PC-3 (cell line): ENCODE measurements at regions of chr9 and their contacts with region 1.

Region 1: DNA sequence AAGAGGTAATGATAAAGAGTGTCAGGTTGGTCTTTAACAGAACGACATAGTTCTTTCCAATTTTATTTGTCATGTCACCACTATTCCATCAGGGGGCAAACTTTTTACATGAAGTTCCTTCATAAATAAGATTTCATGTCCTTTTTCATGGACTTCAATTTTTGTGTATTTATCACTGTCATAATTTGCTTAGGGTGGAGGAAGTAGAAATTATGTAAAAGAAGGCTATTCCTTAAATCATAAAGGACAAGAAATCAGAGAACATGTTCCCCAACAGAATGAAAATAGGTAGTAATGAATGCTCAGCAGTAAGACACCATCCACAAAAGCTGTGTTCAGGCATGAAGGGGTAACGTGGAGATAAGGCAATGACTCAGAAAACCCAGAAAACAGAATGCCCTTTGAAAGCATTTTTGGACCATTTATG is 72.7 kb downstream of the ZFAND5 start:
- DNase-seq: peak; percentile 59
- ATAC-seq: peak; percentile 37
- H3K4me3 ChIP-seq: no peak overlapping the region
- H3K27ac ChIP-seq: no peak overlapping the region
- H3K4me1 ChIP-seq: peaks cover 10% of the 10 kb centered on the region
- H3K27me3 ChIP-seq: no peaks in the 10 kb centered on the region
- CTCF ChIP-seq: peak; percentile 58

Region 2: GRCh38 chr9:72315510-72316311 is 23.4 kb after region 1 on chr9:
- CTCF ChIA-PET with region 1: no interaction called
- POLR2A ChIA-PET with region 1: interaction called, 11 read pairs
- intact Hi-C with region 1: no loop called
- DNase-seq: peak; percentile 52
- ATAC-seq: peak; percentile 75
- H3K4me3 ChIP-seq: peak overlapping the region; percentile 47; the same call in 1 of the 2 replicates
- H3K27ac ChIP-seq: peak overlapping the region; percentile 70
- H3K4me1 ChIP-seq: peaks cover 20% of the 10 kb centered on the region
- H3K27me3 ChIP-seq: no peaks in the 10 kb centered on the region
- CTCF ChIP-seq: no peak

Region 3: DNA sequence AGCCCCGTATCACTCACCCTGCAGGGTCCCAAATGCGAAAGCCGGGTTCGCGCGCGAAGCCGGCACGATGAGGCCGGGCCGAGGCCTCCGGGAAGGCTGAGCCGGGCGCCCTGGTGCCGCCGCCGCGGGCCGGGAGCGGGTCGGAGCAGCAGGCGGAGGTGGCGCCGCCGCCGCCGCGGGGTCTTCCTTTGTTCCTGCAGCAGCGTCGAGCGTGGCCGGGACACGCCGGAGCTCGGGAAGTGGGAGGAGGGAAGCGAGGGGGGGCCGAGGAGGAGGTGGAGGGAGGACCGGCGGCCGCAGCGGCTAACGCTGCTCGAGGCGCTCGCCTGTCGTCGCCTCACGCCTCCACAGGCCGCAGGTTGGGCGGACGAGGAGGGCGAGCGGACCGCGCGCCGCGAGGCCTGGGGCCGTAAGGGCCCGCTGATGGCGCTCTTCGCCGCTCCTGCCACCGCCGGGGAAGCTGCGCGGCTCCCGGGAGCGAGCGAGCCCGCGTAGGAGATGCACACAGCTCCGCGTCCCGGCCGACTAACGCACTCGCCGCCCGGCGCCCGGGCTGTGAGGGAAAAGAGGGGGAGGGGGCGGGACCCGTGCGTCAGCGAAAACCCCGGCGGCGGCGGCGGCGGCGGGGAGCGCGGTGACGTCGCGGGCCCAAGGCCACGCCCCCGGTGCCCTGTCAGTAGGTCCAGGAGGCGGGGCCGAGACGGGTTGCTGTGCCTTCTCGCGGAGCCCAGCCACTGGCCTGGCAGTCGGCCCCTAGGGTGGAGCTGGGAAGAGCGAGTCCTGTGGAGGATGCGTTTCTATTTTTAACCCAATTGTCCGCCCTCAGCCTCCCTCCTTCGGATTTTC is 72.6 kb after region 1 on chr9 and contains the start of gene ZFAND5:
- CTCF ChIA-PET with region 1: no interaction called
- POLR2A ChIA-PET with region 1: interaction called, 4 read pairs
- intact Hi-C with region 1: loop called (anchors 2 kb)
- DNase-seq: peak; percentile 93
- ATAC-seq: peak; percentile 85
- H3K4me3 ChIP-seq: peak within 1 kb of the TSS; percentile 98
- H3K27ac ChIP-seq: peak within 1 kb of the TSS; percentile 98
- H3K4me1 ChIP-seq: peaks cover 19% of the 10 kb centered on the region; the same call in 1 of the 2 replicates
- H3K27me3 ChIP-seq: no peaks in the 10 kb centered on the region
- CTCF ChIP-seq: no peak
- total RNA-seq, gene ZFAND5: 84.1 and 88.8 TPM in 2 replicates

Region 4: DNA sequence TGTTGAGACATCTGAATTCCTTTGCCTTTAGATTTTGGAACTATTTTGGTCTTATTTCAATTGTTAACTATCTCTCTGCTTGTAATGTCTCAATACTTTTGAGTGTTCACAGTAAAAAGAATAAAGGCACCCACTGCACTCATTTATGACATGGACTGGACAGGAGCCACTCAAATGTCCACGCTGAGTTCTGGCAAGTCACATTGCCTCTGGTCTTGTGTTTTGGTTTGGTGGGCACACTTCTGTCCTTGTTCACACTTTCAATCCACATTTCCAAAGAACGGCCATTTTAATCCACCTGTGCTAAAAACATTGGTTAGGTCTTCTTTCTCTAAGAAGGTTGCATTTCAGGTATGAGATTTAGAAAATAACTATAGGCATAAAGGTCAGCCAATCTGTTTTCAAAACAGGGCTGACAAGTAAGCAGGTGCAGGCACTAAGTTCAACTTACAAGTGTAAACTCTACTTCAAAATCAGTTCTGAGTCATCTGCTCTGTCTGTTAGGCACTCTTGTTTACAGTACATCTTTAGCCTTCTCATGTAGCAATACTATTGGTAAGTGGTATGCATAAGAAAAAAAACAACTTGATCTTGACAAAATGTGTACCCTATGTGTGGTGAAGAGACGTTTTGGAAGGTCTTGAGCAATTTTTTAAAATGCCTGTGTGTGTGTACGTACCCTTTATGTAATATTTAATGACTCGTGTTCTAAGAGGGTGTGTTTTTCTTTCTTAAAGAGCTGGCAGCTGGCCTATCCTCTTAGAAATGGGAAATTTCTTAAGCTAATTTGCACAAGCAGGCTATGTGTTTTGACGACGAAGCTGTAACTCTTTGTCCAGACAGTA is 104.2 kb after region 1 on chr9:
- CTCF ChIA-PET with region 1: no interaction called
- POLR2A ChIA-PET with region 1: no interaction called
- intact Hi-C with region 1: no loop called
- DNase-seq: peak; percentile 59
- ATAC-seq: peak; percentile 95
- H3K4me3 ChIP-seq: no peak overlapping the region
- H3K27ac ChIP-seq: no peak overlapping the region
- H3K4me1 ChIP-seq: peaks cover 10% of the 10 kb centered on the region
- H3K27me3 ChIP-seq: no peaks in the 10 kb centered on the region
- CTCF ChIP-seq: no peak

Region 5: DNA sequence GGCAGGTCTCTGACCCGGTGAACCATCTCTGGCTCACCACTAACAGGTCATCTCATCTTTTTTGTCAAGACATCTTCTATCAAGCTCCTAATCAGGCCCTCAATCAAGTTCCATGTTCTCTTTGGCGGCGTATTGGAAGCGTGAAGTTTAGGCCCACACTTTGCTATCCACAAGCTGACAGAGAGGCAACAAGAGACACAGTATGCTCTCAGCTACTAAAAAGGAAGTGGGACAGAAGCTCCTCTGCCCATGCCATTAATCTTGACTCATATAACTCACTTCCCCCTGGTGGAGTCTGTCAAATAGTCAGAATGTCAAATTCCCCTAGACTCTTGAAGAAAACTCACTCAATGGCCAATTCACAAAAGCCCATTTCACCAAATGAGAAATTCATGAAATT is 151.6 kb after region 1 on chr9:
- CTCF ChIA-PET with region 1: no interaction called
- POLR2A ChIA-PET with region 1: no interaction called
- intact Hi-C with region 1: loop called (anchors 5 kb)
- DNase-seq: peak; percentile 57
- ATAC-seq: peak; percentile 41
- H3K4me3 ChIP-seq: no peak overlapping the region
- H3K27ac ChIP-seq: peak overlapping the region; percentile 83
- H3K4me1 ChIP-seq: peaks cover 55% of the 10 kb centered on the region
- H3K27me3 ChIP-seq: no peaks in the 10 kb centered on the region
- CTCF ChIP-seq: no peak

Region 6: GRCh38 chr9:72592502-72593403 is 300.5 kb after region 1 on chr9:
- CTCF ChIA-PET with region 1: interaction called, 3 read pairs
- POLR2A ChIA-PET with region 1: no interaction called
- intact Hi-C with region 1: loop called (anchors 1 kb)
- DNase-seq: peak; percentile 66
- ATAC-seq: peak; percentile 75
- H3K4me3 ChIP-seq: no peak overlapping the region
- H3K27ac ChIP-seq: no peak overlapping the region
- H3K4me1 ChIP-seq: peaks cover 4% of the 10 kb centered on the region; the same call in 1 of the 2 replicates
- H3K27me3 ChIP-seq: no peaks in the 10 kb centered on the region
- CTCF ChIP-seq: peak; percentile 81